Panc1 (cell line): ENCODE measurements at regions of chr20 and their contacts with region 1.

Region 1: GRCh38 chr20:56468316-56469082 is at the start of gene RTF2:
- DNase-seq: peak; percentile 54
- ATAC-seq: peak; percentile 100
- H3K4me3 ChIP-seq: peak within 1 kb of the TSS; percentile 95 to 98
- H3K27ac ChIP-seq: peak within 1 kb of the TSS; percentile 95
- H3K4me1 ChIP-seq: peaks cover 9% of the 10 kb centered on the region; the same call in 1 of the 2 replicates
- H3K27me3 ChIP-seq: no peaks in the 10 kb centered on the region
- CTCF ChIP-seq: no peak
- total RNA-seq, gene RTF2: 89.2 TPM

Region 2: GRCh38 chr20:56222196-56222595 is 246.3 kb before region 1 on chr20:
- CTCF ChIA-PET with region 1: no interaction called
- POLR2A ChIA-PET with region 1: no interaction called
- in situ Hi-C with region 1: no loop called
- intact Hi-C with region 1: no loop called
- DNase-seq: no peak
- ATAC-seq: no peak
- H3K4me3 ChIP-seq: no peak overlapping the region
- H3K27ac ChIP-seq: no peak overlapping the region
- H3K4me1 ChIP-seq: no peaks in the 10 kb centered on the region
- H3K27me3 ChIP-seq: no peaks in the 10 kb centered on the region
- CTCF ChIP-seq: no peak

Region 3: GRCh38 chr20:56423886-56424285 is 44.6 kb before region 1 on chr20:
- CTCF ChIA-PET with region 1: no interaction called
- POLR2A ChIA-PET with region 1: interaction called, 13 read pairs
- in situ Hi-C with region 1: no loop called
- intact Hi-C with region 1: no loop called
- DNase-seq: no peak
- ATAC-seq: no peak
- H3K4me3 ChIP-seq: no peak overlapping the region
- H3K27ac ChIP-seq: no peak overlapping the region
- H3K4me1 ChIP-seq: no peaks in the 10 kb centered on the region
- H3K27me3 ChIP-seq: no peaks in the 10 kb centered on the region
- CTCF ChIP-seq: no peak